ENCODE measurements at regions of chrX and their contacts with region 1.

Region 1: GRCh38 chrX:10077425-10078188 is 79.2 kb upstream of the CLCN4 start:
- DNase-seq: peak in 2 of 9 experiments; percentile 40 to 55
- ATAC-seq: peak; percentile 68
- H3K4me3 ChIP-seq: no peak overlapping the region
- H3K4me3 Mint-ChIP-seq: no peak overlapping the region
- H3K27ac ChIP-seq: no peak overlapping the region
- H3K27ac Mint-ChIP-seq: no peak overlapping the region
- H3K4me1 ChIP-seq: no peaks in the 10 kb centered on the region
- H3K4me1 Mint-ChIP-seq: peaks cover 8% of the 10 kb centered on the region
- H3K27me3 ChIP-seq: no peaks in the 10 kb centered on the region
- H3K27me3 Mint-ChIP-seq: no peaks in the 10 kb centered on the region
- CTCF ChIP-seq: no peak

Region 2: DNA sequence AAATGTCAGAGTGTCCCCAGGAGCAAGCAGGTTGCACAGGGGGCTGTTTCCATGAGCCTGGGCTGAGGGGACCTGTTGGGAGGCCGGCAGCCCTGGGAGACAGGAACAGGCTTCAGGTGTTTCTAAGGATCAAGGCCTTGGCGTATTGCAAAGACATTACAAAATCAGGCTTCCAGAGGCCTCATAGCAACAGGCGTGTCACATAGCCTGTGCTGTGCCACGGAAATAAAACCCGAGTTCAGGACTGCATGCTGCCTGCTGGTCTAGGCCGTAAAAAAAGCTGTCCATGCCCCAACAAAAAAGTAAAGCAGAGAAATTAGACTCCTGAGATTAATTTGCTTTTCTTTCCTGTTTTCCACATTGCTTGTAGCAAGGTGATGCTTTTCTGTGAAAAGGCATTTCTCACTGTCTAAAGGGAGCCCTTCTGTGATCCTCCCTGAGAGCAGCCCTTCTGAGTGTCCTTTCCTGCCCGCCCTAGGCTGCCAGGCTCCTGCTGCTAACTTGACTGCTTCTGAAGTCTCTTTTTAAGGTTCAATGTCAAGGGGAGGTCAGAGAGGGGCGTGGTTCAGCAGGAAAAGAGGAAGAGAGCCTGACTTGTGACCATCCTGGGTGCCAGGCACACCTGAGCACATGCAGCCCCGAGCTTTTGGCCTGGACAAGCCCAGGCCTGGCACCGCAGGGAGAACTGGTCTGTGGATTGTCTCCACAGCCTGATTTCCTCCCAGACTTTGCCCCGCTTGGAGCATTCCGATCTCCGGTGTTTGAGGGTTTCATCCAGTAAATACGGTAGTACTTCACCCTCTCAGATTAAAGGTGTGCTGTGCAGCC is 270.0 kb before region 1 on chrX:
- CTCF ChIA-PET with region 1: no interaction called
- POLR2A ChIA-PET with region 1: no interaction called
- intact Hi-C with region 1: no loop called
- DNase-seq: no peak
- ATAC-seq: no peak
- H3K4me3 ChIP-seq: no peak overlapping the region
- H3K4me3 Mint-ChIP-seq: no peak overlapping the region
- H3K27ac ChIP-seq: no peak overlapping the region
- H3K27ac Mint-ChIP-seq: no peak overlapping the region
- H3K4me1 ChIP-seq: no peaks in the 10 kb centered on the region
- H3K4me1 Mint-ChIP-seq: no peaks in the 10 kb centered on the region
- H3K27me3 ChIP-seq: no peaks in the 10 kb centered on the region
- H3K27me3 Mint-ChIP-seq: no peaks in the 10 kb centered on the region
- CTCF ChIP-seq: no peak

Region 3: DNA sequence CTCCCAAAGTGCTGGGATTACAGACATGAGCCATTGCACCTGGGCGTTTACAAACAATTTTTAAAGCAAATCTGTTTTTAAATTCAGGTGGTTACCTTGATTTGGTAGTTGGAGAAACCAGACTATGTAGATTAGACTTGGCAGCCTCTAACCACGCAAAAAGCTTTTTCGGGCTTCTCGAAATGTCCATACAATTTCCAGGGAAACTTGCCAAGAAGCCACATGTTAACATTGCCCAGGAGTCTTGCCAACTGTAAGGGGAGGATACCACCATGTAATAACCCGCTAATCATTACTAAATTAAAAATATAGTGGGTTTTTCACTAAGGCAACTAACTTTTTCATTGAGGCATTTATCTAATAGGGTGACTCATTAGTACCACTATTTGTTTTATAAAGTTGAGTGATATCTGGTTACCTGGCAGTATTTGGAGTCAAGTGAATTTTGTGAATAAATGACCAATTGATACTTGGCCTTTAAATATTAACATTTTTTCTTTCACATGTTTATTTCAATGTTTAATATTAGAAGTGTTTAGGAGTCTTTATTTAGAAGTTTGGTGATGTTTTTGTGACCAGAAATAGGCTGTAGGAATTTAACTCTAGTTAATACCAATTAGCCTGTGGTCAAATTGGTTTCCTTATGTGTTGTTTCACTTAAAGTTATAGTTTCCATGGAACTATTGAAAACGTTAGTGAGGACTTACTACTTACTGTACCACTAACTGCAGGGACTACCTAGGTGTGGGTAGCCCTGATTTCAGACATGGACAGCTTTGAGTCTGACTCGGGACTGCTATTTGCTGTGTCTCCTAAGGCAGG is 49.1 kb before region 1 on chrX:
- CTCF ChIA-PET with region 1: no interaction called
- POLR2A ChIA-PET with region 1: no interaction called
- intact Hi-C with region 1: loop called in 1 of 2 experiments (anchors 5 kb)
- DNase-seq: no peak
- ATAC-seq: no peak
- H3K4me3 ChIP-seq: no peak overlapping the region
- H3K4me3 Mint-ChIP-seq: no peak overlapping the region
- H3K27ac ChIP-seq: no peak overlapping the region
- H3K27ac Mint-ChIP-seq: no peak overlapping the region
- H3K4me1 ChIP-seq: no peaks in the 10 kb centered on the region
- H3K4me1 Mint-ChIP-seq: peaks cover 5% of the 10 kb centered on the region
- H3K27me3 ChIP-seq: no peaks in the 10 kb centered on the region
- H3K27me3 Mint-ChIP-seq: no peaks in the 10 kb centered on the region
- CTCF ChIP-seq: no peak

Measured in CD8-positive, alpha-beta T cell (primary cell).